HCT116 (cell line): ENCODE measurements at regions of chr12 and their contacts with region 1.

Region 1: DNA sequence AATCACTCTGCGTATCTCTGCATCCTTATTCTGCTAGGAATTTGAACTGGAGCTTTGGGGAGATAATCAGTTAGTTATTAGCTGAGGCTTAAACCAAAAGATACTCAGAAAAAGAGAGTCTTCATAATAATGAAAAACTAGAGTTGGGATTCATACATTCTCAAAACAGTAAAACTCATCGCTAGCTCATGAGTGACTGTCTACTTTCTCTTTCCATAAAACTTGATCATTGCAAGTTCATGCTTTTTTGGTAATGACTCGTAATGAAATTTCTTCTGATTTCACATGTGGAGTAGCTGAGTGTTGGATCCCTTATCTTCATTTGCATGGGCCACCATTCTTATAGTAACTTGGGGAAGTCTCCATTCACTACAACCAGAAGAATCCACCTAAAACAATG is 397.7 kb downstream of the PDZRN4 start:
- DNase-seq: no peak
- ATAC-seq: no peak
- H3K4me3 ChIP-seq: no peak overlapping the region
- H3K27ac ChIP-seq: no peak overlapping the region
- H3K4me1 ChIP-seq: no peaks in the 10 kb centered on the region
- H3K27me3 ChIP-seq: no peaks in the 10 kb centered on the region
- CTCF ChIP-seq: no peak
- POLR2A ChIP-seq: no peak
- RAD21 ChIP-seq: no peak

Region 2: DNA sequence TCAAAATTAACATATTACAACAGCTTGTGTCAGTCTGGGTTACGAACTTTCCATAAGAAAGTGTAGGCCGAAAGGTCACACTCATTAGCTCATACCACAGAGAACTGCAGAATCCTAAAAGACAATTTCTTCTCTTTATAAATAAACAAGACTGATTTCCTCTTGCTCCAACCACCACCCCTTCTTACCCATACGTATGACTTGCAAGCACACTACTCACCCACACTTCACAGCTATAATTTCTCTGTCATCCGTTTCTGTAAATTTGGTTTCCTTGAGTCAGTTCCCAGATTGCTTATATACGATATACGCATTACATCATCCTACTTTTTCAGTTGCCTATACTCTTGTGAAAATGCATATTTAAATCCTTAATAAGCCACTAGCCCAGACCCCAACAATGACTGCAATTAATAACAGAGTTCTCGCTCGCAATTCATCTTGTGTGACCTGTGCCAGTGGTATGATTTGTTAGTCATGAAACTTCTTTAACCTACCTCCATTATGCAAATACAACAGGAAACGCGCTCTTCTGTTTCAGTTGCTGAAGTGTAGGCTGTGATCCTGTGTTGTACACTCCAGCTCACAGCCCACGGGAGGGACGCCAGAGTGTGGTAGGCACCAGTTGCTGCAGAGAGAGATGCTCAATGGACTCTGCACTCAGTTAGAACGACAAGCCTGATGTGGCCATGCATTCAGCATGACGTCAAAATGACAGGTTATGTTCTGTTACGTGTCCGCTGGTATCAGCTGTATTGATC is 19.9 kb after region 1 on chr12:
- CTCF ChIA-PET with region 1: no interaction called
- POLR2A ChIA-PET with region 1: no interaction called
- RAD21 ChIA-PET with region 1: no interaction called
- intact Hi-C with region 1: loop called (anchors 2 kb)
- DNase-seq: no peak
- ATAC-seq: no peak
- H3K4me3 ChIP-seq: no peak overlapping the region
- H3K27ac ChIP-seq: no peak overlapping the region
- H3K4me1 ChIP-seq: no peaks in the 10 kb centered on the region
- H3K27me3 ChIP-seq: no peaks in the 10 kb centered on the region
- CTCF ChIP-seq: no peak
- POLR2A ChIP-seq: no peak
- RAD21 ChIP-seq: no peak

Region 3: DNA sequence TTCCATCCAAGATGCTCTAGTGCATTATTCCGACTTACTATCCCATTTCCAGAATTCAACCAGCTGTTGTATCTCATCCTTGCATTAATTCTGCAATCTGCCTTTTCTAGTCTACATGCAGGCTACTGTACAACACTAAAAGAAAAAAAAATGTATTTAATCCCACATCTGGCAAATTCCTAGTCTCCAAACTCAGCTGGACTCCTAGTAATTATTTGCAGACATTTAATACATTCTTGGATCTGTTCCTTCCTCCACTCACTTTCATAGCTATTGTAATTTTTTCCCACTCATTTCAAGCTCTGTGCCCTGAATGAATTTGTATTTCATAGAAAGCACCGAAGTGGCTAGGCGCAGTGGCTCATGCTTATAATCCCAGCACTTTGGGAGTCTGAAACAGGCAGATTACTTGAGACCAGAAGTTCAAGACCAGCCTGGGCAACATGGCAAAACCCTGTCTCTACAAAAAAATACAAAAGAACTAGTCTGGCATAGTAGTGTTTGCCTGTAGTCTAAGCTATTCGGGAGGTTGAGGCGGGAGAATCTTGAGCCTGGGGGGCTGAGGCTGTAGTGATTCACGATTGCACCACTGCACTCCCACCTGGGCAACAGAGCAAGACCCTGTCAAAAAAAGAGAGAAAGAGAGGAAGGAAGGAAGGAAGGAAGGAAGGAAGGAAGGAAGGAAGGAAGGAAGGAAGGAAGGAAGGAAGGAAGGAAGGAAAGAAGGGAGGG is 691.8 kb after region 1 on chr12:
- CTCF ChIA-PET with region 1: no interaction called
- POLR2A ChIA-PET with region 1: no interaction called
- RAD21 ChIA-PET with region 1: no interaction called
- intact Hi-C with region 1: no loop called
- DNase-seq: no peak
- ATAC-seq: no peak
- H3K4me3 ChIP-seq: no peak overlapping the region
- H3K27ac ChIP-seq: no peak overlapping the region
- H3K4me1 ChIP-seq: no peaks in the 10 kb centered on the region
- H3K27me3 ChIP-seq: no peaks in the 10 kb centered on the region
- CTCF ChIP-seq: no peak
- POLR2A ChIP-seq: no peak
- RAD21 ChIP-seq: no peak